B cell (primary cell): ENCODE measurements at regions of chr4 and their contacts with region 1.

Region 1: DNA sequence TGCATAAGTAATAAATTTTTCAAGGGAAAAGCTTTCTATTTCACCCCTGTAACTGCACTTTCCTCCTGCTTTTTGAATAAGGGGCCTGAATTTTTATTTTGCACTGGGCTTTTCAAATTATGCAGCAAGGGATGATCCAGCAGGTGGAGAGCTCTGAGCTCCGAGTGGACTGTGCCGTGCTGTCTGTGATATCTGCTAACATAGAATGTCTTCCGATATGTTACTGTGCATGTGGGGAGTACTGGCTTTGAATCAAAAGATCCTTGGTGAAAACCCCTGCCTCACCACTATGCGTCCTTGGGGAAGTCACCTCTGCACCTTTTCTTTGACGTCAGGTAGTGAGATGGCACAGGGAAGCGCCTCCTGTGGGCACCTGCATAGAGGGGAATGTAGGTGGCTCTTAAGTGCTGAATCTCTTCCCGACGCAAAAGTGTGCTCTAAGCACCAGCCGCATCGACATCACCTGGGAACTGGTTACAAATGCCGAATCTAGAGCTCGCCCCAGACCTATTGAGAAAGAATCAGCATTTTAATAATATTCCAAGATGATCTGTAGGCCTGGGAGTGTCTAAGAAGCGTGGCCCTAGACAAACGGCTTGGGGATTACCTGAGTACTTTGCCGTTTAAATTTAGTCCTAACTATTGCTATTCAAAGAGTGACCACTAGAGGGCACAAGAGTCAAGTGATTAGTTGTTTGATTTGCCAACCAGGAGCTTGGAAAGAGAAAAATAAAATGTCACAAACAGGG is 19.2 kb upstream of the WFS1 start:
- DNase-seq: peak; percentile 77
- ATAC-seq: peak; percentile 47
- H3K4me3 ChIP-seq: no peak overlapping the region
- H3K4me3 Mint-ChIP-seq: no peak overlapping the region
- H3K27ac ChIP-seq: no peak overlapping the region
- H3K27ac Mint-ChIP-seq: no peak overlapping the region
- H3K4me1 ChIP-seq: peaks cover 0 to 5% of the 10 kb centered on the region in 2 donors
- H3K4me1 Mint-ChIP-seq: no peaks in the 10 kb centered on the region
- H3K27me3 ChIP-seq: peaks cover 0 to 22% (median 8%) of the 10 kb centered on the region in 4 experiments
- H3K27me3 Mint-ChIP-seq: peaks cover 44% of the 10 kb centered on the region
- CTCF ChIP-seq: peak; percentile 86

Region 2: DNA sequence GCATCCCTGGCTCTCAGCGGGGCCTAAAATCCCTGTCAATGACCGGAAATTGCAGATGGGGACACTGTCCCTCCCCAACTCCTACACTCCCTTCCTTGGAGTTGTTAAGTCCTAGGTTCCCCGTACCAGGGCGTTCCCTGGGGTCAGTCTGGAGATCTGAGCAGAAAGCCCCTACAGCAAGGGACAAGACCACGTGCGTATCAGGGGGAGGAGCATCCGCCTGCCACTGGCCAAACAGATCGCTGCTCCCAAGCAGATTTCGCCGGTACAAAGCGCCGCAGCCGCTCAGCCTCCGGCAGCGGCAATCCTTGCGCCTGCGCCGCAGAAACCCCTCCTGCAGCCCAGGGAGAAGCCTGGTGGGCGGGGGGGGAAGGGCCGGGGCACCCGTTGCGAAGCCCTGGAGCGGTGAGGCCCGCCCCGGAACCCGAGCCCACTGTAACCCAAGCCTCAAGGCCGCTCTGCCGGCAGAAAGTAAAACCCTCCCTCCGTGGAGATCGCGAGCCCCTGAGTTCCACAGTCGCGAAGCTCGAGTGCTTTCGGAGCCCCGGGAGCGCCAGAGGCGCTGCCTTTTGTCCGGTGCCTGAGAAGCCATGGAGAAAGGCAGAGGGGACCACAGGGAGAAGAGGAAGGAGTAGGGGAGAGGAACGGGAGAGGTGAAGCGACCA is 360.2 kb before region 1 on chr4:
- CTCF ChIA-PET with region 1: no interaction called
- POLR2A ChIA-PET with region 1: no interaction called
- intact Hi-C with region 1: no loop called
- DNase-seq: no peak
- ATAC-seq: no peak
- H3K4me3 ChIP-seq: peak overlapping the region in 1 of 5 experiments; percentile 5
- H3K4me3 Mint-ChIP-seq: peak overlapping the region; percentile 29
- H3K27ac ChIP-seq: no peak overlapping the region
- H3K27ac Mint-ChIP-seq: no peak overlapping the region
- H3K4me1 ChIP-seq: peaks cover 31 to 34% of the 10 kb centered on the region in 2 donors
- H3K4me1 Mint-ChIP-seq: peaks cover 29% of the 10 kb centered on the region
- H3K27me3 ChIP-seq: peaks cover 0 to 70% (median 37%) of the 10 kb centered on the region in 4 experiments
- H3K27me3 Mint-ChIP-seq: peaks cover 58% of the 10 kb centered on the region
- CTCF ChIP-seq: no peak

Region 3: GRCh38 chr4:6169239-6169638 is 81.2 kb before region 1 on chr4:
- CTCF ChIA-PET with region 1: no interaction called
- POLR2A ChIA-PET with region 1: no interaction called
- intact Hi-C with region 1: no loop called
- DNase-seq: no peak
- ATAC-seq: no peak
- H3K4me3 ChIP-seq: no peak overlapping the region
- H3K4me3 Mint-ChIP-seq: no peak overlapping the region
- H3K27ac ChIP-seq: no peak overlapping the region
- H3K27ac Mint-ChIP-seq: no peak overlapping the region
- H3K4me1 ChIP-seq: no peaks in the 10 kb centered on the region
- H3K4me1 Mint-ChIP-seq: no peaks in the 10 kb centered on the region
- H3K27me3 ChIP-seq: no peaks in the 10 kb centered on the region
- H3K27me3 Mint-ChIP-seq: no peaks in the 10 kb centered on the region
- CTCF ChIP-seq: no peak

Region 4: GRCh38 chr4:6269616-6270511 is 19.5 kb after region 1 on chr4 and contains the start of gene WFS1:
- CTCF ChIA-PET with region 1: interaction called, 24 read pairs
- POLR2A ChIA-PET with region 1: no interaction called
- intact Hi-C with region 1: no loop called
- DNase-seq: peak; percentile 99
- ATAC-seq: peak; percentile 99
- H3K4me3 ChIP-seq: peak within 1 kb of the TSS; percentile 13 to 95 (median 88)
- H3K4me3 Mint-ChIP-seq: peak within 1 kb of the TSS; percentile 92
- H3K27ac ChIP-seq: no peak within 1 kb of the TSS
- H3K27ac Mint-ChIP-seq: peak within 1 kb of the TSS; percentile 68
- H3K4me1 ChIP-seq: peaks cover 22 to 33% of the 10 kb centered on the region in 2 donors
- H3K4me1 Mint-ChIP-seq: peaks cover 32% of the 10 kb centered on the region
- H3K27me3 ChIP-seq: no peaks in the 10 kb centered on the region
- H3K27me3 Mint-ChIP-seq: peaks cover 1% of the 10 kb centered on the region
- CTCF ChIP-seq: no peak
- total RNA-seq, gene WFS1: 6.7 and 7.2 TPM in 2 replicates

Region 5: GRCh38 chr4:6327041-6327917 is 76.9 kb after region 1 on chr4:
- CTCF ChIA-PET with region 1: interaction called, 451 read pairs
- POLR2A ChIA-PET with region 1: interaction called, 3 read pairs
- intact Hi-C with region 1: loop called (anchors 1 kb)
- DNase-seq: peak; percentile 75
- ATAC-seq: peak; percentile 78
- H3K4me3 ChIP-seq: no peak overlapping the region
- H3K4me3 Mint-ChIP-seq: no peak overlapping the region
- H3K27ac ChIP-seq: no peak overlapping the region
- H3K27ac Mint-ChIP-seq: no peak overlapping the region
- H3K4me1 ChIP-seq: no peaks in the 10 kb centered on the region
- H3K4me1 Mint-ChIP-seq: no peaks in the 10 kb centered on the region
- H3K27me3 ChIP-seq: peaks cover 0 to 35% (median 3%) of the 10 kb centered on the region in 4 experiments
- H3K27me3 Mint-ChIP-seq: peaks cover 29% of the 10 kb centered on the region
- CTCF ChIP-seq: peak; percentile 92

Region 6: DNA sequence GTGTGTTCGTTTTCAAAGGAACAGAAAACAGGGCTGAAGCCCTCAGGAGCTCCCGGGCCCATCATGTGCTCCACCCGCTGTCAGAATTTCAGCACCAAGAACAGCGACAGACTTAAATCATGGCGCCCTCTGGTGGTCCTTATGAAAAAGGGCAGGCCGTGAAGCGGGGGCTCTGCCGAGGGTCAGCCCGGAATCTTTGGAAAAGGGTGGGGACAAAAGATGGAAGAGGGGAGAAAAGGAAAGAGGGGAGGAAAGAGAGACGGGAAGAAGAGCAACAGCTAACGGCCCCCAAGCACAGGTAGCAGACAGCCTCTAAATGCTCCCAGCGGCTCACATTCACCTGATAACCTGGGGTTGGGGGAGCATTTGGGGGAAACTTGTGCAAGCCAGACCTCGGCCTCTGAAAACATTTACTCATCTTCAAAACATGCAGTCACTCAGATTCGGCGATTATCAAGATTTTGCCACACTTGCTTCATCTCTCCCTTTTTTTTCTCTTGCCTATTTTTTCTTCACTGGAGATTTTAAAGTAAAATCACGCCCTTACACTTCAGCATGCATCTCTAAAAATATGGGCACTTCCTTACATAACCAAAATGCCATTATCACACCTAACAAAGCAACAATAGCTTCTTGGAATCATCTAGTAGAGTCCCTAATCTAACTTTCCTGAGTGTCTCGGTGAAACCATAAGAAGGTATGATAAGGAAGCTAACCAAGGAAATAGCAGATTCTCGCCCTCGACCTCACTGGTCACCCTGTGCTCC is 296.5 kb after region 1 on chr4:
- CTCF ChIA-PET with region 1: interaction called, 21 read pairs
- POLR2A ChIA-PET with region 1: no interaction called
- intact Hi-C with region 1: no loop called
- DNase-seq: peak; percentile 67
- ATAC-seq: peak; percentile 64
- H3K4me3 ChIP-seq: no peak overlapping the region
- H3K4me3 Mint-ChIP-seq: no peak overlapping the region
- H3K27ac ChIP-seq: no peak overlapping the region
- H3K27ac Mint-ChIP-seq: no peak overlapping the region
- H3K4me1 ChIP-seq: no peaks in the 10 kb centered on the region
- H3K4me1 Mint-ChIP-seq: no peaks in the 10 kb centered on the region
- H3K27me3 ChIP-seq: peaks cover 0 to 14% (median 0%) of the 10 kb centered on the region in 4 experiments
- H3K27me3 Mint-ChIP-seq: peaks cover 35% of the 10 kb centered on the region
- CTCF ChIP-seq: peak; percentile 78